ENCODE measurements at regions of chr5 and their contacts with region 1.

Region 1: GRCh38 chr5:50962934-50963872 is 296.8 kb downstream of the PARP8 start:
- DNase-seq: peak; percentile 92

Region 2: DNA sequence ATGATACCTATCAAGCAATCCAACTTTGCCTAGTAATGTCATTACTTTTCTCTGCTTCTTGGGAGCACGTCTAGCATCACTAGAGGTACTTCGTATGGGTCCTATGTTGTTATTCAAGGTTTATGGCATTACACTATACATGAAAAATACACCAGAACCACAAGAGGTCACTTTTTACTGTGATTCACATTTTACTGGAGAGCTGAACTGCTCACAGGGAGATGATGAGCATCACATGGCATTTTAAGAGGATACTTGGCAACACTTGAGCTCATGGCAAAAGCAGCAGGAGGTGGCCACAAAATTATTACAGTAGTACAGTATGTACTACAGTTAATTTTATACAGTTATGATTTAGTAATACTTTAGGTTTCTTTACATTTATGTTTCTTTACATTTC is 73.4 kb before region 1 on chr5:
- in situ Hi-C with region 1: no loop called
- DNase-seq: no peak

Region 3: GRCh38 chr5:52007230-52007858 is 1044.1 kb after region 1 on chr5:
- in situ Hi-C with region 1: loop called (anchors 25 kb)
- DNase-seq: peak; percentile 47

Measured in KBM-7 (cell line).